HepG2 (cell line): ENCODE measurements at regions of chr22 and their contacts with region 1.

Region 1: GRCh38 chr22:31872209-31872608 is 72.1 kb upstream of the YWHAH start:
- DNase-seq: peak; percentile 33
- ATAC-seq: peak; percentile 69
- H3K4me3 ChIP-seq: no peak overlapping the region
- H3K27ac ChIP-seq: no peak overlapping the region
- H3K4me1 ChIP-seq: no peaks in the 10 kb centered on the region
- H3K27me3 ChIP-seq: no peaks in the 10 kb centered on the region
- CTCF ChIP-seq: peak; percentile 70
- EP300 ChIP-seq: no peak
- POLR2A ChIP-seq: no peak
- RAD21 ChIP-seq: peak; percentile 65; the same call in 1 of the 2 replicates

Region 2: DNA sequence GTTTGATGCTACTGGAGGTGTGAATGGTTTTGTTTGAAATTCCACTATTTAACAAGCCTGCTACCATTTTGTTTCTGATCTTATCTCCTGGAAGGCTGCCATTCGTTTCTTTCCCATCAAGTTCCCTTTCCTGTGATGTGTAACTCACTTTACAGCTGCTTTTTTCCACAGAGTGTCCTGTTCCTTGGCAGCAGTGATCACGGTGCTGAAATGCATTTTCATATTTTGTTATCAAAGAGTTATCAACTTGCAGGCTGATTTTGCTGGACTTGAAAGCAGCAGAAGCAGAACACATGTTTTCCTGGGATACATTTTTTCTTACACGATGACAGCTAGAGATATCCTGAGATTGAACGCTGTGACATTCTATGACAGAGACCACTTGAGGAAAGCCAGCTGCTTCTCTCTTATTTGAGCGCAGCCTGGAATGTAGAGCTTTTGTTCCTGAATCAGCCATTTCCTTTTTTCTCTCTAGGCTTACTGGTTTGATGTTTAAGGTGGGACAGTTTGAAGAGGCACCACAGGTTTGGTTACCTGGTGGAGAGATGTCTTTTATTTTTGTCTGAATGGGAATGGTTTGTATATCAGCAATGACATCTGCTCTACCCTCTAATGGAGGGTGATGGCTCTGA is 156.9 kb before region 1 on chr22:
- CTCF ChIA-PET with region 1: no interaction called
- POLR2A ChIA-PET with region 1: no interaction called
- in situ Hi-C with region 1: no loop called
- intact Hi-C with region 1: no loop called
- DNase-seq: no peak
- ATAC-seq: no peak
- H3K4me3 ChIP-seq: no peak overlapping the region
- H3K27ac ChIP-seq: no peak overlapping the region
- H3K4me1 ChIP-seq: peaks cover 8% of the 10 kb centered on the region
- H3K27me3 ChIP-seq: no peaks in the 10 kb centered on the region
- CTCF ChIP-seq: no peak
- EP300 ChIP-seq: no peak
- POLR2A ChIP-seq: no peak
- RAD21 ChIP-seq: no peak

Region 3: DNA sequence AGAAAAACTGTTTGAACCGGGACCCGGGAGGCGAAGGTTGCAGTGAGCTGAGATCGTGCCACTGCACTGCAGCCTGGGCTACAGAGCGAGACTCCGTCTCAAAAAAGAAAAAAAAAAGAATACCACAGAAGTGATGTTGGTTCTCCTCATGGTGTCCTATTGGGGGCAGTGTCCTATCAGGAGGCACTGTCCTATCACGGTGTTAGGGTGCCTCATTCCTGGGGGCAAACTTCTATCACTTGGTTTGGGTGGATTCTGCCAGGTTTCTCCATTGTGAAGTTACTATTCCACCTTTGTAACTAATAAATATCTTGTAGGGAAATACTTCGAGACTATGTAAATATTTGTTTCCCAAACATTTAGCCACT is 141.9 kb before region 1 on chr22:
- CTCF ChIA-PET with region 1: no interaction called
- POLR2A ChIA-PET with region 1: no interaction called
- in situ Hi-C with region 1: no loop called
- intact Hi-C with region 1: no loop called
- DNase-seq: no peak
- ATAC-seq: peak; percentile 60
- H3K4me3 ChIP-seq: no peak overlapping the region
- H3K27ac ChIP-seq: no peak overlapping the region
- H3K4me1 ChIP-seq: peaks cover 45% of the 10 kb centered on the region
- H3K27me3 ChIP-seq: no peaks in the 10 kb centered on the region
- CTCF ChIP-seq: peak; percentile 35
- EP300 ChIP-seq: no peak
- POLR2A ChIP-seq: no peak
- RAD21 ChIP-seq: no peak

Region 4: DNA sequence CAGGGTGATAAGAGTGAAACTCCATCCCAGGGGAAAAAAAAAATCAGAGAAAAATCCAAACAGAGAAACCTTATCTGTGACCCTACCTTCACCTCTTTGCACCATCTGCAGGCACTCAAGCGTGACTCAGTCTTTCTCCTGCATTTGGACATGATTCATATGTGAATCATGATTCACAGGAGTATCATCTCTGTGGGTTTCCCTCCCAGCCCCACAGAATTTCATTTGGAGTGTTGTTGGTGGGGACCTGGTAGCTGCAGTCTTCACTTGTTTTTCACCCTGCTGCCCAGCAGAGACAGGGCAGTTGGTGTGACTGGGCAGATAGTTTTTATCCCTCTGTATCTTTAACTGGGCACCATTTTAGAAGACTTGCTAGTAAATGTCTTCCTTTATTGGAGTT is 42.7 kb before region 1 on chr22:
- CTCF ChIA-PET with region 1: no interaction called
- POLR2A ChIA-PET with region 1: no interaction called
- in situ Hi-C with region 1: no loop called
- intact Hi-C with region 1: no loop called
- DNase-seq: peak; percentile 46
- ATAC-seq: no peak
- H3K4me3 ChIP-seq: no peak overlapping the region
- H3K27ac ChIP-seq: no peak overlapping the region
- H3K4me1 ChIP-seq: peaks cover 16% of the 10 kb centered on the region
- H3K27me3 ChIP-seq: no peaks in the 10 kb centered on the region
- CTCF ChIP-seq: no peak
- EP300 ChIP-seq: peak in 1 of 2 experiments; percentile 9; a peak in 1 of 4 replicates
- POLR2A ChIP-seq: no peak
- RAD21 ChIP-seq: no peak

Region 5: DNA sequence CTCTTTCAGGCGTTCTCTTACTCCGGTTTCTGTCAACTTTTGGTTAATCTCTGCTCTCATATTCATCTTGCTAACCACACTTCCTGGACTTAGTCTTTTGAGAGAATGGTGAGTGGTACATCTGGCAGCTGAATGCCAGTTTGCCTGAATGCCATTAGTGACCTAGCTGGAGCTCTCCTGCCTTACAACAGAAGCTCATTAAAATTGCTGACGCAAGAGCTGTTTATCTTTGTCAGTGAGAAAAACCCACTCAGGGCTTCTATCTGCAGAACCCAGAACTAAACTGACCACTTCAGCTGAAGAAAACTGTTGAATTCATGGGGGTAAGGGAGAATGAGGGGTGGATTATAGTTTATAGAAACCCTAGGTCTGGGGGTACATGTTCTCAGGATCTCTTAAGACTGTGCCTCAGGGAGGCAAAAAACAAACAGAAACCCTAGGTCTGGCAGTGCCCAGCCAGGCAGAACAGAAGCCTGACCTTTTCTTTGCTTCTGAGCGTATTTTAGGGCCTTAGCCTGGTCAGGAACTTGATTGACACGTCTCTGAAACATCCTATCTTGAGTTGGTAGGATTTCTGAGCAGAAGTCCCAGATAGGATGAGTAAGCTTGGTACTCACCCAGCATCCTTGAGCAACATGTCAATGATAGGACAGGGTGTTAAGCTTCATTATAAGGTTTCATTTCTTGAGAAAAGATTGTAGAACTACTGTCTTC is 19.3 kb after region 1 on chr22:
- CTCF ChIA-PET with region 1: no interaction called
- POLR2A ChIA-PET with region 1: no interaction called
- in situ Hi-C with region 1: no loop called
- intact Hi-C with region 1: no loop called
- DNase-seq: no peak
- ATAC-seq: no peak
- H3K4me3 ChIP-seq: no peak overlapping the region
- H3K27ac ChIP-seq: no peak overlapping the region
- H3K4me1 ChIP-seq: peaks cover 16% of the 10 kb centered on the region; the same call in 1 of the 2 replicates
- H3K27me3 ChIP-seq: no peaks in the 10 kb centered on the region
- CTCF ChIP-seq: no peak
- EP300 ChIP-seq: no peak
- POLR2A ChIP-seq: no peak
- RAD21 ChIP-seq: no peak

Region 6: GRCh38 chr22:31943976-31944699 is 71.9 kb after region 1 on chr22 and contains the start of gene YWHAH:
- CTCF ChIA-PET with region 1: interaction called, 9 read pairs
- POLR2A ChIA-PET with region 1: no interaction called
- in situ Hi-C with region 1: loop called (anchors 5 kb)
- intact Hi-C with region 1: loop called (anchors 1 kb)
- DNase-seq: peak; percentile 88
- ATAC-seq: peak; percentile 81
- H3K4me3 ChIP-seq: peak within 1 kb of the TSS; percentile 61 to 94 (median 94)
- H3K27ac ChIP-seq: peak within 1 kb of the TSS; percentile 86
- H3K4me1 ChIP-seq: peaks cover 44% of the 10 kb centered on the region
- H3K27me3 ChIP-seq: no peaks in the 10 kb centered on the region; a peak in 1 of 5 replicates
- CTCF ChIP-seq: no peak; the same call in 1 of the 2 replicates
- EP300 ChIP-seq: no peak
- POLR2A ChIP-seq: peak; percentile 69 to 84
- RAD21 ChIP-seq: no peak
- total RNA-seq, gene YWHAH: 92.7 and 112 TPM in 2 replicates

Region 7: GRCh38 chr22:31970490-31971444 is 98.6 kb after region 1 on chr22:
- CTCF ChIA-PET with region 1: interaction called, 13 read pairs
- POLR2A ChIA-PET with region 1: no interaction called
- in situ Hi-C with region 1: no loop called
- intact Hi-C with region 1: no loop called
- DNase-seq: peak; percentile 31
- ATAC-seq: peak; percentile 83
- H3K4me3 ChIP-seq: peak overlapping the region; percentile 42 to 74 (median 46)
- H3K27ac ChIP-seq: no peak overlapping the region
- H3K4me1 ChIP-seq: peaks cover 27% of the 10 kb centered on the region
- H3K27me3 ChIP-seq: peaks cover 0 to 9% of the 10 kb centered on the region in 2 experiments; a peak in 3 of 5 replicates
- CTCF ChIP-seq: peak; percentile 94
- EP300 ChIP-seq: no peak
- POLR2A ChIP-seq: no peak
- RAD21 ChIP-seq: peak; percentile 51; the same call in 1 of the 2 replicates